Naive thymus-derived CD8-positive, alpha-beta T cell (primary cell): ENCODE measurements at regions of chr1 and their contacts with region 1.

Region 1: DNA sequence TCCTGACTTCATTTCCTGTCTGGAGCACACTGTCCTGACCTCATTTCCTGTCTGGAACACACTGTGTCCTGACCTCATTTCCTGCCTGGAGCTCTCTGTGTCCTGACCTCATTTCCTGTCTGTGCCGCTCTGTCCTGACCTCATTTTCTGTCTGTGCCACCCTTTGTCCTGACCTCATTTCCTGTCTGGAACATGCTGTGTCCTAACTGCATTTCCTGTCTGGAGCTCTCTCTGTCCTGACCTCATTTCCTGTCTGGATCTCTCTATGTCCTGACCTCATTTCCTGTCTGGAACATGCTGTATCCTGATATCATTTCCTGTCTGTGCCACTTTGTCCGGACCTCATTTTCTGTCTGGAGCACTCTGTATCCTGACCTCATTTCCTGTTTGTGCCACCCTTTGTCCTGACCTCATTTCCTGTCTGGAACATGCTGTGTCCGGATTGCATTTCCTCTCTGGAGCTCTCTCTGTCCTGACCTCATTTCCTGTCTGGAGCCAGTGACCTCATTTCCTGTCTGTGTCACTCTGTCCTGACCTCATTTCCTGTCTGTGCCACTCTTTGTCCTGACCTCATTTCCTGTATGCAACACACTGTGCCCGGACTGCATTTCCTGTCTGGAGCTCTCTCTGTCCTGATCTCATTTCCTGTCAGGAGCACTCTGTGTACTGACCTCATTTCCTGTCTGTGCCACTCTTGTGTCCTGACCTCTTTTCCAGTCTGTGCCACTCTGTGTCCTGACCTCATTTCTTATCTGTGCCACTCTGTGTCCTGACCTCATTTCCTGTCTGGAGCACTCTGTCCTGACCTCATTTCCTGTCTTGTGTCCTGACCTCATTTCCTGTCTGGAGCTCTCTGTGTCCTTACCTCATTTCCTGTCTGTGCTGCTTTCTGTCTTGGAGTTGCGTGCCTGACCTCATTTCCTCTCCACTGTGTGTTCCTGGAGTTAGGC is 27.6 kb downstream of the SKI start:
- DNase-seq: peak; percentile 47 to 97 (median 92)
- ATAC-seq: peak; percentile 59 to 75
- H3K4me3 Mint-ChIP-seq: no peak overlapping the region
- H3K27ac Mint-ChIP-seq: no peak overlapping the region
- H3K4me1 Mint-ChIP-seq: peaks cover 29 to 61% (median 55%) of the 10 kb centered on the region in 4 donors
- H3K27me3 Mint-ChIP-seq: peaks cover 0 to 6% (median 0%) of the 10 kb centered on the region in 5 donors

Region 2: DNA sequence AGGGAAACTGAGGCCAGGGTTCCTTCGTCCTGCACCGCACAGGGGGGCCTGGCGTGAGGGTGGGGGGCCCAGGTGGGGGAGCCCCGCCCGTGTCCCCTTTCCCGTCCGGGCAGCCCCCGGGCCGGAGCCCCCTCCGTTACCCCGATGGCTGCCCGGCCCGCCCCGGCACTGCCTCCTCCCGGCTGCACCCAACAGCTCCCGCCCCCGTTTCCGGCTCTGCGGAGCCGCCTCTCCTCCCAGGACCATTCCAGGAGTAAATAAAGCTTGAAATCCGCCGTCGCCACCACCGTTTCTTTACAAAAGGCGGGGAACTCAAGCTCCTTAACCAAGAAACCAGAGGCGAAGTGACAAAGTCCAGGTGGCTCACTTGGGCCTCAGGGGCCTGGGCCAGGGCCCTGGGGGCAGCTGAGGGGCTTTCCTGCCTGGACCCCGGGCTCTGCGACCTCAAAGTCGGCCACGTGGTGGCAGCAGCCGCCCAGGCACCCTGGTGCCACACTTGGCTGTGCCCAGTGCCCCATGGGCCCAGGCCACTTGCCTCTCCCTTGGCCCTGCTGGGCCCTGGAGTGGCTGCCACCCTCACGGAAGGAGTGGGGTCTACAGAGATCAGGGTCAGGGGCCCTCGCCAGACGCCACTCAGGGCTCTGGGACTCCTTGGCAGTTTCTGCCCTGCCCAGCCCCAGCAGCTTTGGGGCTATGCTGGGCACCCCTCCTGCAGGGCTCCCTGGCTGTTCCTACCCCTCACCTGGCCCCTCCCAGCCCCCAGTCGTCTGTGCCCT is 60.6 kb before region 1 on chr1:
- POLR2A ChIA-PET with region 1: interaction called, 19 read pairs
- DNase-seq: peak; percentile 81 to 100 (median 88)
- ATAC-seq: peak; percentile 81 to 82
- H3K4me3 Mint-ChIP-seq: peak overlapping the region; percentile 75 to 91 (median 85)
- H3K27ac Mint-ChIP-seq: peak overlapping the region; percentile 53 to 97 (median 92)
- H3K4me1 Mint-ChIP-seq: peaks cover 5 to 46% (median 33%) of the 10 kb centered on the region in 4 donors
- H3K27me3 Mint-ChIP-seq: no peaks in the 10 kb centered on the region

Region 3: DNA sequence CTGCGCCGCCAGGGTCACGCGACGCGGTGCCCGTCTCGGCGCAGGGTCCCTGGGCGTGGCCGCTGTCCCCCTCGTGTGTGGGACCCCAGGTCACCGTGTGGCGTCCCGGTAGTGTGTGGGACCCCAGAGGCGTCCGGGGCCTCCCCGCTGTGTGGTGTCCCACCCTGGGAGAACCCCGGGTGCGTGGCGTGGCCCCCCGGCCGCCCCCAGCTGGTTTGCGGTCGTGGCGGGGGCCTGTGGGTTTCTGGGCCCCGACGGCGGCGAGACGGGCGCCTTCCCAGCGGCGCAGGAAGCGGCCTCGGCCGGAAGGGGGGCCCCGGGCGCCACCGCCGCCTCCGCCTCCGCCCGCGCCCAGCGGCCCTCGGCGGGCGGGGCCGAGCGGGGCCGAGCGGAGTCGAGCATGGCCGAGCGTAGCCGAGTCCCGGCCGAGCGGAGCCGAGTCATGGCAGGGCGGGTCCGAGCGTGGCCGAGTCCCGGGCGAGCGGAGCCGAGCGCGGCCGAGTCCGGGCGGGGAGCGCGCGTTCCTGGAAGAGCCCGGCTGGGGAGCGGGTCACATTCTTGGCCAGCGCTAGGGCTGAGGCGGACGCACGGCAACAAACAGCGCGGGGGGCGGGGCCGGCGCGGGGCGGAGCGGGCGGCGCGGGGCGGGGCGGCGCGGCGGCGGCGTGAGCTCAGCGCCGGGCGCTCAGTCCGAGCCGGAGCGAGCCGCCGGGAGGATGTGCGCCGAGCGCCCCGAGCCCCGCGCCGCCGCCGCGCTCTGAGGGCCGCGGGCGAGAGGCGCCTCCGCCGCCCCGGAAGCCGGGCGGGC is 28.1 kb before region 1 on chr1:
- POLR2A ChIA-PET with region 1: interaction called, 388 read pairs
- DNase-seq: peak; percentile 90 to 96 (median 94)
- ATAC-seq: peak; percentile 75
- H3K4me3 Mint-ChIP-seq: peak overlapping the region in 9 of 10 donors; percentile 30 to 88 (median 61)
- H3K27ac Mint-ChIP-seq: peak overlapping the region in 5 of 10 donors; percentile 33 to 92 (median 62)
- H3K4me1 Mint-ChIP-seq: peaks cover 22 to 39% (median 25%) of the 10 kb centered on the region in 4 donors
- H3K27me3 Mint-ChIP-seq: no peaks in the 10 kb centered on the region

Region 4: DNA sequence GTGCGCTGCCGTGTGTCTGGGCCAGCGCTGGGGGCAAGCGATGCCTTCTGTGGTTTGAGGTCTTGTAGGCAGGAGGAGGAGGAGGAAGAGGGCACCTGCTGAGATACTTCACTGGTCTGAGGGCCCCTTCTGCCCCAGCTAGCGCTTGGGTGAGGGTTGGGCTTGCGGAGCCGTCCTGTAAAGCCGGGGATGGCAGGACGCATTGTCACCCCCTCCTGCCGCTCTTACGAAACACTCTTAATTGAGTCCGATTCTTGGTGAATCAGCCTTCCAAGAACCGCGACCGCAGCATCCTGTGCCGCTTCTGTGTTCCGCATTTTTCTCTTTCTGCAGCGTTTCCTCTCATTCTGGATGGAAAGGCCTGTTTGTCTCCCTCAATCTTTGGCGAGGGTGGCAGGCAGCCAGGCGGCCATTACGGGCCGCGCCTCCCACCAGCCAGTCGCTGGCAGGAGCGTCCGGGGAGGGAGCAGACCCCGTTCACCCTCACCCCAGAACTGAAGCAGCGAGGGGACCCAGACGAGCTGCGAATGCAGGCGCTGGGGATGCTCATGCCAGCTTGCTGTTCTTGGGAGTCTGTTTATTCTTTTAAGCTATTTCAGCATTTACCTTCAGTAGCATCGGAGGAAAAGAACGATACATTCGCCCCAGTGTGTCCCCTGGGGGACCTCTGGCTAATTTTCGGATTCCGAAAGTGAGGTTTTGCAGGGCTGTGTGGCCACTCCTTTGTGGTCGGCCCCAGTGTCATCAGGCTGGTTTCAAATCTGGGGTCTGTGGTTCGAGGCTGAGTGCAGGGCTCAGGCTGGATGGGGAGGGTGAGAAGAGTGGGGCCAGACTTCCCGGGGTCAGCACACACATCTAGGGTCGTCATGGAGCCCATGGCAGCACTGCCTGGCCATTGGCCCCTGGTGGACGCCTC is 35.2 kb after region 1 on chr1:
- POLR2A ChIA-PET with region 1: interaction called, 10 read pairs
- DNase-seq: peak in 9 of 10 donors; percentile 65 to 79 (median 72)
- ATAC-seq: peak; percentile 66 to 77
- H3K4me3 Mint-ChIP-seq: peak overlapping the region; percentile 75 to 92 (median 88)
- H3K27ac Mint-ChIP-seq: peak overlapping the region; percentile 90 to 98 (median 94)
- H3K4me1 Mint-ChIP-seq: peaks cover 37 to 91% (median 87%) of the 10 kb centered on the region in 4 donors
- H3K27me3 Mint-ChIP-seq: no peaks in the 10 kb centered on the region

Region 5: GRCh38 chr1:2300851-2301606 is 45.3 kb after region 1 on chr1:
- POLR2A ChIA-PET with region 1: interaction called, 52 read pairs
- DNase-seq: peak; percentile 82 to 99 (median 97)
- ATAC-seq: peak; percentile 82 to 84
- H3K4me3 Mint-ChIP-seq: peak overlapping the region; percentile 79 to 90 (median 86)
- H3K27ac Mint-ChIP-seq: peak overlapping the region; percentile 89 to 100 (median 99)
- H3K4me1 Mint-ChIP-seq: peaks cover 17 to 68% (median 60%) of the 10 kb centered on the region in 4 donors
- H3K27me3 Mint-ChIP-seq: no peaks in the 10 kb centered on the region

Region 6: DNA sequence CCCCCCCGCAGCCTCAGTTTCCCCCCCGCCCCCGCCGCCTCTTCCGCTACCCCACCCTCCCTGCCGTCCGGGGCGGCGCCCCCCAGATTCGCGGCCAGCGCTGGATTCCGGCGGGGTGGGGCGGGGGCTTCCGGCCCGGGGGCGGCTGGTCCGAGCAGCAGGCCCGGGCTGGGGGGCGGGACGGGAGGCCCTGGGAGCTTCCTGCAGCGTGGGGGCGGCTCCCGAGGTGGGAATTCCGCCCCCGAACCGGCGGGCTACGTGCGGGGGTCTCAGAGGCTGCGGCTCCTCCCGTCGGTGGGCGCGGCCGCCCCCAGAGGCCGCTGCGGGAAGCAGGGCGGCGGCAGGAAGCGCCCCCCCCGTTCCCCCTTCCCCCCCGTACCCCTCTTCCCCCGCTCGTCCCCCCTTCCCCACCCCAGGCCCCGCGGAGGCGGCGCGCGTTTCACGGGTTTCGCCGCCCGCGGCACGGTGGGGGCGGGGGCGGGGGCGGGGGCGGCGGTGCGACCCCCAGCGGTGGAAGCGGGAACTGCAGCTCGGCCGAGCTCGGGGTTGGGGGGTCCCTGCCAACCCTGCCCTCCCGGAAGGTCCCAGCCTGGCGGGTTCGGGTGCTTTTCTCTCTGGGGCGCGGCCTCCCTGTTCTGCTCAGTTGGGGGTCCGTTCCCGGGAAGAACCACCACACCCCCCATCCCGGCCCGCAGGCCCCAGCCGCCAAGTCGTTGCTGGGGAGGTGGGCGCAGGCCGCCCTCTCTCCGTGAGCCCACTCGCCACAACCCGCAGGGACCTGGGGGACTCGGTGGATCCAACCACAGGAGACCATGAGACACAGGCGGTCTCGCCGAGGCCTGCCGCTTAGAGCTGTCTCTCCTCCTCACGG is 59.3 kb after region 1 on chr1:
- POLR2A ChIA-PET with region 1: interaction called, 26 read pairs
- DNase-seq: peak; percentile 65 to 86 (median 76)
- ATAC-seq: peak; percentile 44 to 62
- H3K4me3 Mint-ChIP-seq: peak overlapping the region; percentile 36 to 77 (median 69)
- H3K27ac Mint-ChIP-seq: peak overlapping the region in 9 of 10 donors; percentile 48 to 92 (median 85)
- H3K4me1 Mint-ChIP-seq: peaks cover 4 to 47% (median 30%) of the 10 kb centered on the region in 4 donors
- H3K27me3 Mint-ChIP-seq: no peaks in the 10 kb centered on the region

Region 7: GRCh38 chr1:2391041-2391930 is 135.6 kb after region 1 on chr1 and contains the starts of genes MORN1 and RER1:
- POLR2A ChIA-PET with region 1: interaction called, 15 read pairs
- DNase-seq: peak; percentile 90 to 100 (median 99)
- ATAC-seq: peak; percentile 95 to 96
- H3K4me3 Mint-ChIP-seq: peak within 1 kb of the TSS; percentile 82 to 94 (median 90)
- H3K27ac Mint-ChIP-seq: peak within 1 kb of the TSS; percentile 87 to 94 (median 92)
- H3K4me1 Mint-ChIP-seq: peaks cover 22 to 43% (median 37%) of the 10 kb centered on the region in 4 donors
- H3K27me3 Mint-ChIP-seq: no peaks in the 10 kb centered on the region
- polyA plus RNA-seq, gene MORN1: 4.3 to 7.1 (median 5.0) TPM
- polyA plus RNA-seq, gene RER1: 118 to 146 (median 126) TPM